Thyroid gland (tissue), 4 donors: ENCODE measurements at regions of chr10 and their contacts with region 1.

Region 1: GRCh38 chr10:96129387-96130325 is at the start of gene ZNF518A:
- DNase-seq: peak; percentile 90 to 93
- H3K4me3 ChIP-seq: peak within 1 kb of the TSS; percentile 67 to 98 (median 72)
- H3K27ac ChIP-seq: peak within 1 kb of the TSS; percentile 88 to 96 (median 95)
- H3K4me1 ChIP-seq: peaks cover 7 to 8% of the 10 kb centered on the region in 2 donors
- H3K27me3 ChIP-seq: peaks cover 2% of the 10 kb centered on the region
- CTCF ChIP-seq: no peak
- POLR2A ChIP-seq: peak in 1 of 2 donors; percentile 40
- total RNA-seq, gene ZNF518A: 31.1 to 43.5 (median 35.5) TPM

Region 2: DNA sequence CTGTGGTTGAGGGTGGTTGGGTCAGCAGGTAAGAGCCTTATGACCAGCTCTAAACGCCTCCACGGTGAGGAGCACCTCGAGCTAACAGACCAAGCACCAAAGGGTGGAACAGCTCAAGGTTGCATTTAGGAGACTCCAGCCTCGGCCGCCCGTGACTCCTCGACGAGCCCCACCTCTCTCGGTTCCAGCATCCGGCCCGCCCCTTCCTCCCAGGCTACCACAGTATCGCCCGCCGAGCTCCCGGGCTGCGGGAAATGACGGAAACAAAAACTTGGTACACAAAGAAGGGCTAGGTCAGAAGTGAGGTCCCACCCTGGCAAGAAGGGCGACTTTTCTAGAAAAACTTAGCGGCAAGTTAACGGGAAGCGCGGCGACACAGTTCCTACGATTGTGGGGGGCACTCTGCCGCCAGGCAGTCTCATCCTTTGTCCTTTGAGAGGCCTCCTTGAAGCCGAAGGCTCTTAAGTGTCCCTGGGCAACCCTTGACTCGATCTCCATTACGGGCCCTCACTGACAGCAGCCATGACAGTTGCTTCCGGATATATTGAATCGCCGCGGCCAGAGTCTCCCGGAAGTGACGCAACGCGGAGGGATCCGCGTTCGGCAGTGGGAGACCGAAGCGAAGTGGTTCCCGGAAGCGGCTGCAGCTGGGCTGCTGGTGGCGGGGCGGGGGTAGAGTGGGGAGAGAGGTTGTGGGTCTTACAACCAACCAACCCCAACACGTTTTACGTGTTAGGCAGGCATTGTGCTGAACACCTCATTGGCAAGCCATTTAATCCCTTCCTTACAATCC is 39.8 kb before region 1 on chr10:
- intact Hi-C with region 1: loop called (anchors 2 kb)
- DNase-seq: peak; percentile 91 to 95
- H3K4me3 ChIP-seq: peak overlapping the region; percentile 79 to 91 (median 82)
- H3K27ac ChIP-seq: peak overlapping the region; percentile 74 to 89 (median 80)
- H3K4me1 ChIP-seq: peaks cover 0 to 5% of the 10 kb centered on the region in 2 donors
- H3K27me3 ChIP-seq: peaks cover 5% of the 10 kb centered on the region
- CTCF ChIP-seq: no peak
- POLR2A ChIP-seq: peak in 1 of 2 donors; percentile 52